Common myeloid progenitor, CD34-positive (primary cell): ENCODE measurements at regions of chr12 and their contacts with region 1.

Region 1: GRCh38 chr12:131104463-131105350 is 151.0 kb downstream of the ADGRD1 start:
- DNase-seq: peak; percentile 69 to 83 (median 78)
- H3K4me3 ChIP-seq: no peak overlapping the region
- H3K27ac ChIP-seq: no peak overlapping the region
- H3K4me1 ChIP-seq: peaks cover 0 to 6% (median 3%) of the 10 kb centered on the region in 4 experiments
- H3K27me3 ChIP-seq: peaks cover 0 to 7% (median 0%) of the 10 kb centered on the region in 5 experiments

Region 2: DNA sequence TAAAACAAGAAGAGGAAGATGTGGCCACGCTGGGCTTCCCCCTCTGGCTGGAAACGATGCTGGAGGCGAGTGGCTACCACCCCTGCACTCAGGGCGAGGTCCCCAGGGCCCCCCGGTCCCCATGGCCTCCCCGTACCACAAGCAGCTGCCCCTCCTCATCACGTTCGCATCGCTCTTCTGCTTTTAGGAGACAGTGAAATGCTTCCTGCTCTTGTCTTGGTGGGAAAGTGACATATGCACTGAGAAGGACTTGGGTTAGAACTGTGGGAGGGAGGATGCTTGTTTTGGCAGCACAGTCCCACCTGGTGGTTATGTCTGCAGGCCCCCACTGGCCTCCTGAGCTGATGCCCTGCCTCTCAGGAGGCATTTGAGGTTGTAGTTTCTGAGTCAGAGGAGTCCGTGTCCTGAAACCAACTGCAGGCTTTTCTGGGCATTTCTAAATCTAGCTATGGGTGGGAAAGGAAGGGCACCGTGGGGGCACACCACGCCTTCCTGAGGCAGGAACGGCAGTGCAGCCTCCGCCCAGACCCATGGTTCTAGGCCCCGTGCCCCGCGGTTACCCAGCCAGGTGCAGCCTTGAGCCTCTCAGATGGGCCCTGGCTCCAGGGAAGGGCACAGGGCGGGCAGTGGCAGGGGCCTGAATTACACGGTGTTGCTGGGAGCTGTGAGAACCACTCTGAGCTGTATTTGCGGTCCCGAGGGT is 11.7 kb before region 1 on chr12:
- CTCF ChIA-PET with region 1: interaction called, 11 read pairs
- POLR2A ChIA-PET with region 1: no interaction called
- DNase-seq: peak; percentile 54 to 90 (median 87)
- H3K4me3 ChIP-seq: peak overlapping the region in 3 of 7 experiments; percentile 9 to 32 (median 24)
- H3K27ac ChIP-seq: no peak overlapping the region
- H3K4me1 ChIP-seq: peaks cover 0 to 22% (median 18%) of the 10 kb centered on the region in 4 experiments
- H3K27me3 ChIP-seq: peaks cover 0 to 4% (median 0%) of the 10 kb centered on the region in 5 experiments

Region 3: DNA sequence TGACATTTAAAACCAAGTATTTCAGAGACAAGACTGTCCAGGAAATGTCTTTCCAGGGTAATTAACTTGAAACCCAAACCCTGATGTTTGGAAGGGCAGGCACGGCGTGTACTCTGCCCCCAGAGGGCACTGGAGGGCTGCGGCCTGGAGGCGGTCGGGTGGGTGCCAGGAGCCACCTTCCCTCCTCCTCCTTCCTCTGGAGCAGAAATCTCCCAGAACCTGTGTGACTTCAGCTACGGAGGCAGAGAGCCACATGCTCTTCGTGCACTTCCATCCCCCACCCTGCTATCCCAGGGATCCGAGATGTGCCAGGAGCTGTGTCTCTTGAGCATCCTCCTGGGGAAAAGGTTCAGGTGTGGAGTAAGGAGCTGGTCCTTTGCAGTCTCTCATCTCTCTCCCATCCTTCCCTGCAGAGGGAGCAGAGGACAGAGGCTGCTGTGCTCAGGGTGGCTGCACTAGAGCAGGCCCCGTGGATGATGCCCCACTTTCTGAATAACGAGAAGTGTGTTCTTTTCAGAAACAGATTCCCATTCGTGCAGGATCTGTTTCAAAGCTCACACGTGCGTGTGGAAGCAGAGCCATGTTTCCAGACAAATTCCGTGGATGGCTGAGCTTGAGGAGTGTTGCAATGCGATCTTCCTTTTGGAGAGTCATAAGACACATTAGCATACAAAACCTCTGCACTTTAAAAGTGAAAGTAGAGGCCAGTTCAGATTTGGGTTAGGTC is 11.8 kb after region 1 on chr12:
- CTCF ChIA-PET with region 1: interaction called, 93 read pairs
- POLR2A ChIA-PET with region 1: no interaction called
- DNase-seq: peak in 2 of 3 donors; percentile 23 to 37
- H3K4me3 ChIP-seq: no peak overlapping the region
- H3K27ac ChIP-seq: no peak overlapping the region
- H3K4me1 ChIP-seq: peaks cover 0 to 8% (median 0%) of the 10 kb centered on the region in 4 experiments
- H3K27me3 ChIP-seq: no peaks in the 10 kb centered on the region

Region 4: GRCh38 chr12:131454418-131455217 is 349.9 kb after region 1 on chr12:
- CTCF ChIA-PET with region 1: interaction called, 23 read pairs
- POLR2A ChIA-PET with region 1: no interaction called
- DNase-seq: peak; percentile 77 to 85 (median 83)
- H3K4me3 ChIP-seq: no peak overlapping the region
- H3K27ac ChIP-seq: no peak overlapping the region
- H3K4me1 ChIP-seq: peaks cover 0 to 9% (median 5%) of the 10 kb centered on the region in 4 experiments
- H3K27me3 ChIP-seq: no peaks in the 10 kb centered on the region